CD4-positive, alpha-beta T cell (primary cell): ENCODE measurements at regions of chr2 and their contacts with region 1.

Region 1: DNA sequence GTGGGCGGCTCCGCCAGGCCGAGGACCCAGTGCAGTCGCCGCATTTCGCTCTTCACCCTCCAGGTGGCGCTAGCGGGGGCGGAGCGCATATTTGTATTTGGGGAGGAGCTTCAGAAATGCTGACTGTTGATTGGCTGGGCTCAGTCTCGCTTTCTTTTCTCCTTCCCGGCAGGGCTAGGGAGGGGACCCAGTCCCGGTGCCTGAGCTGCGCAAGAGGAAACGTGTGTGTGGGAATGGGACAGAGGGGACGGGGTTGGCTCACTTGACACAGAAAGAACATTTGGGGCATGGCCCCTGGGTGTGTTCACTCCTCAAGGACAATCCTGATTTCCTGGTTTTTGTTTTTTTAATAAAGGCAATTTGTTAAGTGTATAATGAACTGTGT is 20.3 kb upstream of the DNMT3A start:
- DNase-seq: peak; percentile 88 to 98 (median 94)
- ATAC-seq: peak; percentile 96
- H3K4me3 ChIP-seq: peak overlapping the region; percentile 61
- H3K4me3 Mint-ChIP-seq: peak overlapping the region; percentile 90
- H3K27ac ChIP-seq: peak overlapping the region; percentile 67 to 80
- H3K27ac Mint-ChIP-seq: peak overlapping the region; percentile 84
- H3K4me1 ChIP-seq: peaks cover 21% of the 10 kb centered on the region
- H3K4me1 Mint-ChIP-seq: peaks cover 25% of the 10 kb centered on the region
- H3K27me3 ChIP-seq: no peaks in the 10 kb centered on the region
- H3K27me3 Mint-ChIP-seq: no peaks in the 10 kb centered on the region
- CTCF ChIP-seq: peak; percentile 94

Region 2: DNA sequence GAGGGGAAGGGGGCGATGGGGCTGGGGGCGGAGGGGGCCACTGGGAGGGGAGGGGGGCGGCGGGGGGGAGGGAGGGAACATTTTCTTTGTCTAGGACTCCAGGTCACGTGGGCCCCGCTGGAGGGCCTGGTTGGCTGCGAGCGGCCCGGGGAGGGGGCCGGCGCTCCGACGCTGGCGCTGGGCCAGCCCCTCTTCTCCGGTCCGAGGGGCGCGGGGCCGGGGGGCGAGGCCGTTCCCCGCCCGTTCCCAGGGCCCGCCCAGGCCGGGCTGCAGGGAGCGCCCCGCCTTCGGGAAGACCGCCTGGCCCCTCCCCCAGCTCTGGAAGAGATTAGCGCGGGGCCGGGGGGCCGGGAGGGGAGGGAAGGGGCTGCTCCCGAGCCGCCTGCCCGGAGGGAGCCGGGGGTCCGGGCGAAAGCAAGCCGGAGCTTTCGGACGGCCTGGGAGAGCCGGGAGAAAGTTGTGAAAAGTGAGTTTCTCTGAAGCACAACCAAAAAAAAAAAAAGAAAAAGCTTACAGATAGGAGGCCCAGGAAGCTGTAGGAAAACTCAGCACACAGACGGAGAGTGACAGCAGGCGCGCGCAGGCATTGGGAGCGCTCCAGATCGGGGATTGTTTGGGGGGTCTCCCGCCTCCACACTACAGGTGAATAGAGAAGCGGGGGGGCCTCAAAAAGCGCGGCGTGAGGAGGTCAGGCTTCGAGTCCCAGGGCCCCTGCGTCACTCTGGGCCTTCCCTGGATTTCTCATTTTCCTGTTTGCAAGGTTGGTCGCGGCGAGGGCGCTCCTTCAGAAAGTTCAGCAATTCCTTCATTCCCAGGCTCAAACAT is 109.5 kb before region 1 on chr2:
- CTCF ChIA-PET with region 1: interaction called, 5 read pairs
- POLR2A ChIA-PET with region 1: interaction called, 19 read pairs
- intact Hi-C with region 1: no loop called
- DNase-seq: peak in 13 of 14 experiments; percentile 39 to 80 (median 57)
- ATAC-seq: peak; percentile 69
- H3K4me3 ChIP-seq: peak overlapping the region; percentile 80
- H3K4me3 Mint-ChIP-seq: peak overlapping the region; percentile 69
- H3K27ac ChIP-seq: peak overlapping the region; percentile 58 to 64
- H3K27ac Mint-ChIP-seq: peak overlapping the region; percentile 90
- H3K4me1 ChIP-seq: peaks cover 36% of the 10 kb centered on the region
- H3K4me1 Mint-ChIP-seq: peaks cover 47% of the 10 kb centered on the region
- H3K27me3 ChIP-seq: no peaks in the 10 kb centered on the region
- H3K27me3 Mint-ChIP-seq: no peaks in the 10 kb centered on the region
- CTCF ChIP-seq: no peak

Region 3: DNA sequence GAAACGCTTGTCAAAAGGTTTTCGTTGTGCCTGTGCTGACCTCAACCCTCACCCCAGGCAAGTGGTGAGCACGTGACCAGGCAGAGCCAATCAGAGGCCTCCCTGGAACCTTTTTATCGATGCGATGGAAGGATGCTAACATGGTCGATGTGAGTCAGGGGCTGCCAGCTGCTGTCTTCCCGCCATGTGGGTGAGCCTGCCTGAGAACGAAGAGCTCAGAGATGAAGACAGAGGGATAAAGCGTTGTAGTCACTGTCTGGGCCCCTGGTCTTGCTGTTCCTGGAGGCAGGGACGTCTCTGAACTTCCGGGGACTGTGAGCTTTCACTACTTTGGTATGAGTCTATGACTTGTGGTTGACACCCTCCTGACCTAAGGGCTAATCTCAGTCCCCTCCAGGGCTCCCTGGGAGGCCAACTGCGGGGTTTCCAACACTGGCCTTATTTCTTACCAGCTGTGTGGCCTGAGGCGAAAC is 39.0 kb before region 1 on chr2:
- CTCF ChIA-PET with region 1: no interaction called
- POLR2A ChIA-PET with region 1: interaction called, 12 read pairs
- intact Hi-C with region 1: no loop called
- DNase-seq: peak in 11 of 14 experiments; percentile 32 to 80 (median 50)
- ATAC-seq: peak; percentile 76
- H3K4me3 ChIP-seq: peak overlapping the region; percentile 47
- H3K4me3 Mint-ChIP-seq: peak overlapping the region; percentile 81
- H3K27ac ChIP-seq: peak overlapping the region in 1 of 2 donors; percentile 56
- H3K27ac Mint-ChIP-seq: peak overlapping the region; percentile 76
- H3K4me1 ChIP-seq: peaks cover 34% of the 10 kb centered on the region
- H3K4me1 Mint-ChIP-seq: peaks cover 48% of the 10 kb centered on the region
- H3K27me3 ChIP-seq: no peaks in the 10 kb centered on the region
- H3K27me3 Mint-ChIP-seq: no peaks in the 10 kb centered on the region
- CTCF ChIP-seq: no peak

Region 4: DNA sequence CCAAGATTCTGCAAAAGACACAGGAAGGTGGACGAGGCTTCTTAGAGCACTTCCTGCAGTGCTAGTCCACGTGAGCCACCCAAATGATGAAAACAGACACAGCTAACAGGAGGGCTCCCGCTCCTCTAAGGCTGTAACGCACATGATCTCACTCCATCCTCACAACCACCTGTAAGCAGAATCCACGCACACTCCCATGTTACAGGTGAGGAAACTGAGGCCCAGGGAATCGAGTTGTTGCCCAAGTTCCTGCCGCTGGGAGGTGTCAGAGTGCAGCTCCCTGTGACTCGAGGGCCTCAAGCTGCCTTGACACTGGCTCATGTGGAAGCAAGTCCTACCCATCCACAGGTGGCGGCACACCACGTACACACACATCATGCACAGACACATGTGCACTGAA is 24.8 kb before region 1 on chr2:
- CTCF ChIA-PET with region 1: interaction called, 16 read pairs
- POLR2A ChIA-PET with region 1: interaction called, 13 read pairs
- intact Hi-C with region 1: no loop called
- DNase-seq: peak in 3 of 14 experiments; percentile 39 to 55 (median 45)
- ATAC-seq: peak; percentile 18
- H3K4me3 ChIP-seq: no peak overlapping the region
- H3K4me3 Mint-ChIP-seq: peak overlapping the region; percentile 21
- H3K27ac ChIP-seq: peak overlapping the region in 1 of 2 donors; percentile 8
- H3K27ac Mint-ChIP-seq: peak overlapping the region; percentile 77
- H3K4me1 ChIP-seq: peaks cover 79% of the 10 kb centered on the region
- H3K4me1 Mint-ChIP-seq: peaks cover 71% of the 10 kb centered on the region
- H3K27me3 ChIP-seq: no peaks in the 10 kb centered on the region
- H3K27me3 Mint-ChIP-seq: no peaks in the 10 kb centered on the region
- CTCF ChIP-seq: no peak

Region 5: GRCh38 chr2:25376750-25377621 is 14.9 kb after region 1 on chr2:
- CTCF ChIA-PET with region 1: interaction called, 72 read pairs
- POLR2A ChIA-PET with region 1: interaction called, 55 read pairs
- intact Hi-C with region 1: loop called (anchors 1 kb)
- DNase-seq: peak; percentile 81 to 97 (median 90)
- ATAC-seq: peak; percentile 99
- H3K4me3 ChIP-seq: no peak overlapping the region
- H3K4me3 Mint-ChIP-seq: peak overlapping the region; percentile 73
- H3K27ac ChIP-seq: peak overlapping the region; percentile 48 to 80
- H3K27ac Mint-ChIP-seq: peak overlapping the region; percentile 98
- H3K4me1 ChIP-seq: peaks cover 40% of the 10 kb centered on the region
- H3K4me1 Mint-ChIP-seq: peaks cover 43% of the 10 kb centered on the region
- H3K27me3 ChIP-seq: no peaks in the 10 kb centered on the region
- H3K27me3 Mint-ChIP-seq: no peaks in the 10 kb centered on the region
- CTCF ChIP-seq: peak; percentile 97